Activated CD4-positive, alpha-beta T cell treated with anti-CD3 and anti-CD28 coated beads, Interleukin-2, amount 10 ng/mL, durations not matched to agents 24 days and 14 days (primary cell): ENCODE measurements at regions of chr20 and their contacts with region 1.

Region 1: GRCh38 chr20:19661717-19662636 is 96.1 kb upstream of the RIN2 start:
- DNase-seq: peak; percentile 83
- H3K4me3 Mint-ChIP-seq: no peak overlapping the region
- H3K27ac Mint-ChIP-seq: no peak overlapping the region
- H3K4me1 Mint-ChIP-seq: no peaks in the 10 kb centered on the region
- H3K27me3 Mint-ChIP-seq: peaks cover 7% of the 10 kb centered on the region

Region 2: DNA sequence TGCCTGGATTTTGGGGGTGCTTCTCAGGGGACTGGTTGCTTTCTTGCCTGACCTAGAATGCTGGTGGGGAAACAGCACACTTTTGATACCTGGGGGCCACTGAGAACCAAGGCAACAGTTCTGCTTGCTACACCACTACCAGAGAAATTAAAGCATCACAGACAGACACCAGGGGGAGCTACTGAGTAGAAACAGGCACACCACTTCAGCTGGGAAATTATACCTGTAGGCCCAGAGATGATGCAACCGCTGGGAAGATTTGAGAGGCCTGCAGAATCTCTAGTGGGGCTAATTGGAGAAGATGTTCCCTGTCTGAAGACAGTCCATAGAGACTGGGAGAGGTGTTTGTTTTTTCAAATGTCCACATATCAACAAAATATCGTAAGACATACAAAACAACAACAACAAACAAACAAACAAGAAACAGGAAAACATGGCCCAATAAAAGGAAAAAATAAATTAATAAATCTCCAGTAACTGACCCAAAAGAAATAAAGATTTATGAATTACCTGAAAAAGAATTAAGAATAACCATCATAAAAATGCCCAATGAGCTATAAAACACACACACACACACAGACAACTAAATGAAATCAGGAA is 33.3 kb before region 1 on chr20:
- intact Hi-C with region 1: loop called (anchors 1 kb)
- DNase-seq: peak; percentile 83
- H3K4me3 Mint-ChIP-seq: no peak overlapping the region
- H3K27ac Mint-ChIP-seq: no peak overlapping the region
- H3K4me1 Mint-ChIP-seq: no peaks in the 10 kb centered on the region
- H3K27me3 Mint-ChIP-seq: no peaks in the 10 kb centered on the region

Region 3: GRCh38 chr20:19725814-19726525 is 64.0 kb after region 1 on chr20:
- intact Hi-C with region 1: no loop called
- DNase-seq: no peak
- H3K4me3 Mint-ChIP-seq: no peak overlapping the region
- H3K27ac Mint-ChIP-seq: no peak overlapping the region
- H3K4me1 Mint-ChIP-seq: no peaks in the 10 kb centered on the region
- H3K27me3 Mint-ChIP-seq: no peaks in the 10 kb centered on the region